ENCODE measurements at regions of chr1 and their contacts with region 1.

Region 1: GRCh38 chr1:67097305-67097704 is 37.5 kb downstream of the C1orf141 start:
- DNase-seq: peak; percentile 20
- H3K4me3 ChIP-seq: no peak overlapping the region
- H3K27ac ChIP-seq: no peak overlapping the region
- H3K4me1 ChIP-seq: no peaks in the 10 kb centered on the region
- H3K27me3 ChIP-seq: no peaks in the 10 kb centered on the region
- CTCF ChIP-seq: no peak

Region 2: DNA sequence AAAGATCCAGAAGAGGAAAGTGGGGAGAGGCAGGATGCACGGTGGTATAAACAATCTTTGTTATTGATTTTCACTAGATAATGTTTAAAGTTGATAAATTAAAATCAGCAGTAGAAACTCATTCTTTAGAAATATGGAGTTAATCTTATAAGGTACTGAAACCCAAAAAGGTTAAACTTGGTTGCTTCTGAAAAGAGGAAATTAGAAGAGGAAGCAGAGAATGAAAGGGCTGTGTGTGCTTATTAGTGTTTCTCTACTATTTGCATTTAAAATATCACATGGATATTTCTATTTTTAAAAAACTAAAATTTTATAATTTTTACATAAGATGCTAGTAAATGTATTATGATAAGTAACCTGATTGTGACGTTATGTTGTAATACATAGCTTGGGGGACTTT is 13.0 kb after region 1 on chr1:
- CTCF ChIA-PET with region 1: no interaction called
- POLR2A ChIA-PET with region 1: no interaction called
- intact Hi-C with region 1: loop called (anchors 2 kb)
- DNase-seq: no peak
- H3K4me3 ChIP-seq: no peak overlapping the region
- H3K27ac ChIP-seq: no peak overlapping the region
- H3K4me1 ChIP-seq: no peaks in the 10 kb centered on the region
- H3K27me3 ChIP-seq: no peaks in the 10 kb centered on the region
- CTCF ChIP-seq: no peak

Measured in A673 (cell line).